ENCODE measurements at regions of chr4 and their contacts with region 1.

Region 1: DNA sequence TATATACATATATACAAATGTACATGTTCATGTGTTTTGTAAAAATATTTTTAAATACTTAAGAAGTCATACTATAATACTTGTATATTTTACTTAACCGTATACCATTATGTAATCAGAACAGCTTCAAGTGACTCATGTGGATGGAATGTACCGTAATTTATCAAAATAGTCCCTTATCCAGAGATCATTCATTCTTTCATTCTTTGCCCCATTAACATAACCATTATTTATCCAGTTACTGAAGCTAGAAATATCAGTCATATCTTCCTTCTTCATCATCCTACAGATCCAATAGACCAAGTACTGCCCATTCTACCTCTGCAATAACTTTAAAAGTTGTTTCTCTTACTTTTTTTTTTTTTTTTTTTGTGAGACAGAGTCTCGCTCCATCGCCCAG is 164.2 kb downstream of the MAB21L2 start:
- DNase-seq: no peak
- ATAC-seq: no peak
- H3K4me3 ChIP-seq: no peak overlapping the region
- H3K27ac ChIP-seq: no peak overlapping the region
- H3K4me1 ChIP-seq: no peaks in the 10 kb centered on the region
- H3K27me3 ChIP-seq: no peaks in the 10 kb centered on the region
- CTCF ChIP-seq: no peak
- EP300 ChIP-seq: no peak
- POLR2A ChIP-seq: no peak
- RAD21 ChIP-seq: no peak

Region 2: DNA sequence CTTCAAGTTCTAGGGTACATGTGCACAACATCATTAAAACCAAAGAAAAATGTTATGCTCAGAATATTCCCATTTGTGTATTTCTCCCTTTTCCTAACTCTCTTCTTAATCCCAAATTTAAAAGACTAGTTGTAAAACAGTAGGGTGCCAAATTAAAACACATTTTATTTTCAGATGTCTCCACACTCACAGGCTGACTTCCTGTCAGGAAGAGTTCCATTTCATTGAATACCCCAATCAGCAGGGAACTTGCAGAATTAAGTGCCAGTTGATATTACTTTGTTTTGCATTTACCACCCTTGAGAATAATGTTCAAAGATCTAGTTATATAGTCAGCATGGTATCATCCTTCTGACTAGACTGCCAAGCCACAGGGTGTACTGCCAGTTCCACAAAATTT is 43.7 kb after region 1 on chr4:
- CTCF ChIA-PET with region 1: no interaction called
- POLR2A ChIA-PET with region 1: no interaction called
- in situ Hi-C with region 1: no loop called
- intact Hi-C with region 1: loop called (anchors 1 kb)
- DNase-seq: no peak
- ATAC-seq: no peak
- H3K4me3 ChIP-seq: no peak overlapping the region
- H3K27ac ChIP-seq: no peak overlapping the region
- H3K4me1 ChIP-seq: no peaks in the 10 kb centered on the region
- H3K27me3 ChIP-seq: no peaks in the 10 kb centered on the region
- CTCF ChIP-seq: no peak
- EP300 ChIP-seq: no peak
- POLR2A ChIP-seq: no peak
- RAD21 ChIP-seq: no peak

Measured in HepG2 (cell line).